ENCODE measurements at regions of chr19 and their contacts with region 1.

Region 1: DNA sequence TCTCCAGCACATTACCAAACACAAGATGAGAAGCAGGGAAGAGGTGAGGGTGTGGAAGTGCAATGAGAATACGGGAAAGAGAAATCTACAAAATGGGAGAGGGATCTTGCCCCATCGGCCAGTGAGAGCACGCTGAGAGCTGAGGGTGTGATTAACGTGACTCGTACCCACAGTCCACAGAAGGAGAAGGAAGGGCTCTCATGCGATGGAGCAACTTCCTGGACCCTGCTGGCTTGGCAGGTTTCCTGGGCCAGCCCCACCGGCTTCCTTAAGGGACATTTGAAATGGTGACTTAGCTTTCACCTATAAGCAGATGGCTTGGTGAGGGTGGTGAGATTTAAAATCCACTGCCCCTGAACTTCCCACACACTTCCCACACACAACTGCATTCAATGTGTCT is 740.1 kb downstream of the UQCRFS1 start:
- DNase-seq: peak; percentile 23 to 27
- H3K4me3 ChIP-seq: no peak overlapping the region
- H3K27ac ChIP-seq: no peak overlapping the region
- H3K4me1 ChIP-seq: peaks cover 0 to 14% (median 3%) of the 10 kb centered on the region in 4 donors
- H3K27me3 ChIP-seq: peaks cover 0 to 5% (median 0%) of the 10 kb centered on the region in 3 donors
- CTCF ChIP-seq: no peak
- EP300 ChIP-seq: no peak
- POLR2A ChIP-seq: no peak

Region 2: GRCh38 chr19:28196961-28197360 is 275.9 kb before region 1 on chr19:
- intact Hi-C with region 1: no loop called
- DNase-seq: peak in 1 of 2 donors; percentile 26
- H3K4me3 ChIP-seq: no peak overlapping the region
- H3K27ac ChIP-seq: no peak overlapping the region
- H3K4me1 ChIP-seq: no peaks in the 10 kb centered on the region
- H3K27me3 ChIP-seq: peaks cover 0 to 6% (median 0%) of the 10 kb centered on the region in 3 donors
- CTCF ChIP-seq: no peak
- EP300 ChIP-seq: no peak
- POLR2A ChIP-seq: no peak

Region 3: GRCh38 chr19:28710278-28710677 is 237.4 kb after region 1 on chr19:
- intact Hi-C with region 1: loop called (anchors 10 kb)
- DNase-seq: peak in 1 of 2 donors; percentile 89
- H3K4me3 ChIP-seq: no peak overlapping the region
- H3K27ac ChIP-seq: no peak overlapping the region
- H3K4me1 ChIP-seq: no peaks in the 10 kb centered on the region
- H3K27me3 ChIP-seq: no peaks in the 10 kb centered on the region
- CTCF ChIP-seq: peak in 5 of 7 experiments; percentile 29 to 73 (median 43)
- EP300 ChIP-seq: no peak
- POLR2A ChIP-seq: no peak

Measured in stomach (tissue), 19 donors.